ENCODE measurements at regions of chr19 and their contacts with region 1.

Region 1: GRCh38 chr19:44570984-44571684 is 41.7 kb upstream of the CEACAM20 start:
- DNase-seq: peak in 4 of 5 donors; percentile 27 to 60 (median 36)
- H3K4me3 ChIP-seq: no peak overlapping the region
- H3K27ac ChIP-seq: no peak overlapping the region
- H3K4me1 ChIP-seq: no peaks in the 10 kb centered on the region
- H3K27me3 ChIP-seq: no peaks in the 10 kb centered on the region
- CTCF ChIP-seq: peak; percentile 29 to 53 (median 53)
- EP300 ChIP-seq: no peak
- POLR2A ChIP-seq: no peak

Region 2: DNA sequence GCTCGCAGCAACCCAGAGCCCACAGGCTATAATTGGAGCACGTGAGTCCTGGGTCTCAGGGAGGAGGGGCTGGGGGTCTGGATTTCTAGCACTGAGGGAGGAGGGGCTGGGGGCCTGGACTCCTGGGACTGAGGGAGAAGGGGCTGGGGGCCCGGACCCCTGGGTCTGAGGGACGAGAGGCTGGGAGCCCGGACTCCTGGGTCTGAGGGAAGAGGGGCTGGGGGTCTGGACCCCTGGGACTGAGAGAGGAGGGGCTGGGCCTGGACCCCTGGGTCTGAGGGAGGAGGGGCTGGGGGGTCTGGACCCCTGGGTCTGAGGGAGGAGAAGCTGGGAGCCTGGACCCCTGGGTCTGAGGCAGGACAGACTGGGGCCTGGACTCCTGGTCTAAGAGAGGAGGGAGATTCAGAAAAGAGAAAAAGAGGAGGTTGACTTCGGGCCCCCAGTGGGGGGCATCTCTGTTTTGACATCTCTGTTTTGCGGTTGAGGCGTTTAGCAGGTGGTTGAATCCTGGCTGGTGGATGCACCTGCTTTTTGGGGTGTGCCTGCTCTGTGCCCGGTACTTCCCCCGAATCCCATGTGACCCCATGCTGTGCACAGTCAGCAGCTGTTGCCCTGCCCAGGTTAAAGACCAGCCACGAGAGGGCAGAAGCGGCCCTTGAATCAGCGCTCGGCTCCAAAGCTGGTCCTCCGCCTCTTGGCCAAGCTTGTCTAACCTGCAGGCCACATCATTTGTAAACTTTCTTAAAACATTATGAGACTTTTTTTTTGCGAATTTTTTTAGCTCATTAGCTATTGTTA is 83.0 kb after region 1 on chr19:
- intact Hi-C with region 1: loop called in 3 of 4 experiments (anchors 5 to 10 kb)
- DNase-seq: peak; percentile 24 to 66 (median 47)
- H3K4me3 ChIP-seq: no peak overlapping the region
- H3K27ac ChIP-seq: no peak overlapping the region
- H3K4me1 ChIP-seq: no peaks in the 10 kb centered on the region
- H3K27me3 ChIP-seq: no peaks in the 10 kb centered on the region
- CTCF ChIP-seq: peak in 1 of 3 donors; percentile 26
- EP300 ChIP-seq: no peak
- POLR2A ChIP-seq: no peak

Measured in ovary (tissue), 10 donors.